ENCODE measurements at regions of chr16 and their contacts with region 1.

Region 1: DNA sequence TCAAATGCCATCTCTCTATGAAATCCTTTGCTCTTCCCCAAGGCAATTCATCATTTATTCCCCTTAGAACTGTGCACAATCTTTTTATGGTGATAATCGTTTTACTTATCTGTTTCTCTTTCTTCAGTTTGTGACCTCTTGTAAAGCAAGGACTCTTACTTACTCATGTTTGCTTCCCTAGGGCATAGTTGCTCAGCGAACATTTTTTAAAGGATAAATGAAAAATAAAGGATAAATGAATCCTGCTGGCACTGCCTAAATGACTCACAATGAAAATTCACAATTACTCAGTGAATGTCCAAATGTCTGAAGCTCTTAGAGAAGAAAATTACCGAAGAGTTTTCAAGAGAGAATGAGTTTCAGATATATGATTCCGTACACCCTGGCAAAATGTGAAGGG is 671.7 kb downstream of the CDH11 start:
- DNase-seq: no peak
- H3K4me3 ChIP-seq: no peak overlapping the region
- H3K27ac ChIP-seq: no peak overlapping the region
- H3K4me1 ChIP-seq: no peaks in the 10 kb centered on the region
- H3K27me3 ChIP-seq: no peaks in the 10 kb centered on the region
- CTCF ChIP-seq: no peak
- POLR2A ChIP-seq: no peak

Region 2: DNA sequence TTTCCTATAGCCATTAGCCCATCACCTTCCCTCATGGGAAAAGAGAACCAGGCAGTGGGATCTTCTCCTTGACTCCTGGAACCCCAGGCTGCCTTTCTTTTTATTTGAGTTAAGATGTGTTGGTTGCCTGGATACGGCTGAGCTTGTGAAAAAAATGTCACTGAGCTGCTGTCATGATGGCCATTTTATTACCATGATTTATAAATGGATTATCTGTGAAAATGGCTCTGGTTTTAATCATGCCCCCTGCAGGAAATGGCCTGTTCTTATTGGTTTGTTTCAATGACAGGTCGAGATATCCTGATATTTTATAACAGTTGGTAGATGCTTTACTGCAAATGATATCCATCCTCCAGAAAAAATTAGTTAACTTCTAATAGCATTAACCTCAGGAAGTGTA is 31.3 kb after region 1 on chr16:
- intact Hi-C with region 1: loop called (anchors 1 kb)
- DNase-seq: no peak
- H3K4me3 ChIP-seq: no peak overlapping the region
- H3K27ac ChIP-seq: no peak overlapping the region
- H3K4me1 ChIP-seq: no peaks in the 10 kb centered on the region
- H3K27me3 ChIP-seq: no peaks in the 10 kb centered on the region
- CTCF ChIP-seq: no peak
- POLR2A ChIP-seq: no peak